ENCODE measurements at regions of chr17 and their contacts with region 1.

Region 1: DNA sequence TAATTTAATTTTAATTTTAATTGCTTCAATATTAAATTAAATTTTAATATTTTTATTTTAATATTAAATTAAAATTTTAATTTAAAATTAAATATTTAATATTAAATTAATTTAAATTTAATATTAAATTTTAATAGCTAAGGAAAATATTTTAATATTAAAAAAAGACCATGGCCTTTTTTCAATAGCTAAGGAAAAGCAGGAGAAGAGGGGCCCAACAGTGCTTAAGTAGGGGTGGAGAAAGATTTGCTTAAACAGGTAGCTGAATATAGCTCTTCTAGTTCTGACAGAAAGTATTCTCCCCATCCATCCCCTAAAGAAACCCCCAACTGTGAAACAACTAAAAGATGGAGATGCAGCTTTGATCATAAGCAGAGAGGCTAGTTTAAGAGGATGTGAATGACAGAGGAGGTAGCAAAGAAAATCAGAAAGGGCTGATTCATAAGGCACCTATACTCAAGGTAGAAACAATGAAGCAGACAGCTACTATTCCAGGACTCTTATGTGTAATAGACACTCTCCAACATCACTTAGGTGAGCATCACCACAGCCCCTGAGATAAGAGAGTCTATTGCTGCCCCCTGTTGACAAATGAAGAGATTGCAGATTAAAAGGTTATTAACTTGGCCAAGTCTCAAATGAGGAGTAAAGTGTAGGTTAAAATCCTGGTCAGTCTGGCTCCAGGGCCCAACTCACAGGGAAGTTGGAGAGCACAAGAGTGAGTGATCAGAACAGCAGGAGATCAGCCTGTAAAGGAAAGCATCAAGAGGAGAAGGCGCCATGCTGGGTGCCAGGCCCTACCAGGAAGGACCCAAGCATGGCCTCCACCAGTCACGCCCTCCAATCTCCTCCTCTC is 7.8 kb upstream of the RNASEK start:
- DNase-seq: no peak
- ATAC-seq: peak; percentile 59

Region 2: GRCh38 chr17:6913608-6914443 is 90.8 kb before region 1 on chr17:
- intact Hi-C with region 1: loop called (anchors 5 kb)
- DNase-seq: peak; percentile 82
- ATAC-seq: peak; percentile 84

Measured in left ventricle myocardium superior (tissue), 1 donor.